Endothelial cell of umbilical vein (primary cell): ENCODE measurements at regions of chr7 and their contacts with region 1.

Region 1: GRCh38 chr7:108196004-108196403 is 65.8 kb upstream of the LAMB4 start:
- DNase-seq: peak; percentile 16
- H3K4me3 ChIP-seq: no peak overlapping the region
- H3K27ac ChIP-seq: no peak overlapping the region
- H3K4me1 ChIP-seq: peaks cover 5% of the 10 kb centered on the region
- H3K27me3 ChIP-seq: no peaks in the 10 kb centered on the region
- CTCF ChIP-seq: no peak
- POLR2A ChIP-seq: no peak

Region 2: GRCh38 chr7:107939573-107940489 is 256.2 kb before region 1 on chr7:
- CTCF ChIA-PET with region 1: no interaction called
- POLR2A ChIA-PET with region 1: no interaction called
- dilution Hi-C with region 1: no loop called
- intact Hi-C with region 1: no loop called
- DNase-seq: peak; percentile 98
- H3K4me3 ChIP-seq: no peak overlapping the region
- H3K27ac ChIP-seq: peak overlapping the region; percentile 91
- H3K4me1 ChIP-seq: peaks cover 62% of the 10 kb centered on the region
- H3K27me3 ChIP-seq: no peaks in the 10 kb centered on the region
- CTCF ChIP-seq: no peak
- POLR2A ChIP-seq: peak; percentile 56

Region 3: DNA sequence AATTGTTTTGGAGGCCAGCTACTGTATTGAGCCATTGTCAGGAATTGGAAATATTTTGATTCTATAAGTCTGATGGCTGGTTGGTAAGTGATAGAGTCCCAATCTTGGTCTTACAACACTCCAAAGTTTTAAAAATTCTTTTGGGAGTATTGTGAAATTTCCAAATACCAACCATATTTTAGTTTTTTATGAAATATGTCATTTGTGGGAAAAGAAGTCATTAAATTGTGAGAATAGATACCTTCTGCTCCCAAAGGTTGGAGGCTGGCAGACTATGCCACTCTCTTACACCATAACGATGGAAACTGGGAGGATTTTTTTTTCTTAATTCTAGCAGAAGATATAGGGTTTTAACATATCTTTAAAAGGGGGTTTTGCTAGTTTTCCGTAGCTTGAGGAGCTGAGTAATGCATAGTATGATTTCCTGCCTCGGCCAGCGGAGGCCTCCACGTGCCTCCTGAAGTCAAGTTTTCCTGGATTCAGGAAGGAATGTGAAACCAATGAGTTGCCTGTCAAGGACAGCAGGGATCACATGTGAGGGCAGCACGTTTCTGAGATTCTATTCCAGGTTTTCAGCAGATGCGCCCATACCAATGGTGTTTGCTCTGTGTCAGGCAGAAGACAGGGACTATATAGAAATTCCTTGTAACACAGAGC is 26.4 kb after region 1 on chr7:
- CTCF ChIA-PET with region 1: no interaction called
- POLR2A ChIA-PET with region 1: no interaction called
- dilution Hi-C with region 1: no loop called
- intact Hi-C with region 1: loop called (anchors 2 kb)
- DNase-seq: peak; percentile 83
- H3K4me3 ChIP-seq: no peak overlapping the region
- H3K27ac ChIP-seq: peak overlapping the region; percentile 57
- H3K4me1 ChIP-seq: peaks cover 13% of the 10 kb centered on the region
- H3K27me3 ChIP-seq: no peaks in the 10 kb centered on the region
- CTCF ChIP-seq: no peak
- POLR2A ChIP-seq: no peak

Region 4: GRCh38 chr7:109158246-109158645 is 962.2 kb after region 1 on chr7:
- CTCF ChIA-PET with region 1: no interaction called
- POLR2A ChIA-PET with region 1: no interaction called
- dilution Hi-C with region 1: no loop called
- intact Hi-C with region 1: no loop called
- DNase-seq: no peak
- H3K4me3 ChIP-seq: no peak overlapping the region
- H3K27ac ChIP-seq: no peak overlapping the region
- H3K4me1 ChIP-seq: no peaks in the 10 kb centered on the region
- H3K27me3 ChIP-seq: no peaks in the 10 kb centered on the region
- CTCF ChIP-seq: no peak
- POLR2A ChIP-seq: no peak